HCT116 (cell line): ENCODE measurements at regions of chr5 and their contacts with region 1.

Region 1: GRCh38 chr5:141701360-141702119 is 19.5 kb upstream of the ARAP3 start:
- DNase-seq: no peak
- ATAC-seq: peak; percentile 53
- H3K4me3 ChIP-seq: no peak overlapping the region
- H3K27ac ChIP-seq: no peak overlapping the region
- H3K4me1 ChIP-seq: peaks cover 0 to 7% of the 10 kb centered on the region in 2 experiments; a peak in 1 of 4 replicates
- H3K27me3 ChIP-seq: no peaks in the 10 kb centered on the region
- CTCF ChIP-seq: no peak
- POLR2A ChIP-seq: no peak
- RAD21 ChIP-seq: no peak

Region 2: GRCh38 chr5:141326088-141326854 is 375.3 kb before region 1 on chr5:
- CTCF ChIA-PET with region 1: no interaction called
- POLR2A ChIA-PET with region 1: no interaction called
- RAD21 ChIA-PET with region 1: no interaction called
- intact Hi-C with region 1: no loop called
- DNase-seq: no peak
- ATAC-seq: no peak
- H3K4me3 ChIP-seq: no peak overlapping the region
- H3K27ac ChIP-seq: no peak overlapping the region
- H3K4me1 ChIP-seq: peaks cover 0 to 2% of the 10 kb centered on the region in 2 experiments; a peak in 1 of 4 replicates
- H3K27me3 ChIP-seq: no peaks in the 10 kb centered on the region
- CTCF ChIP-seq: no peak
- POLR2A ChIP-seq: no peak
- RAD21 ChIP-seq: no peak

Region 3: GRCh38 chr5:141757402-141757801 is 55.9 kb after region 1 on chr5:
- CTCF ChIA-PET with region 1: no interaction called
- POLR2A ChIA-PET with region 1: no interaction called
- RAD21 ChIA-PET with region 1: no interaction called
- intact Hi-C with region 1: loop called (anchors 1 kb)
- DNase-seq: peak; percentile 34
- ATAC-seq: peak; percentile 93
- H3K4me3 ChIP-seq: no peak overlapping the region
- H3K27ac ChIP-seq: no peak overlapping the region
- H3K4me1 ChIP-seq: peaks cover 0 to 9% of the 10 kb centered on the region in 2 experiments; a peak in 1 of 4 replicates
- H3K27me3 ChIP-seq: peaks cover 3% of the 10 kb centered on the region; the same call in 1 of the 2 replicates
- CTCF ChIP-seq: peak; percentile 61 to 75 (median 71)
- POLR2A ChIP-seq: no peak
- RAD21 ChIP-seq: peak; percentile 85

Region 4: DNA sequence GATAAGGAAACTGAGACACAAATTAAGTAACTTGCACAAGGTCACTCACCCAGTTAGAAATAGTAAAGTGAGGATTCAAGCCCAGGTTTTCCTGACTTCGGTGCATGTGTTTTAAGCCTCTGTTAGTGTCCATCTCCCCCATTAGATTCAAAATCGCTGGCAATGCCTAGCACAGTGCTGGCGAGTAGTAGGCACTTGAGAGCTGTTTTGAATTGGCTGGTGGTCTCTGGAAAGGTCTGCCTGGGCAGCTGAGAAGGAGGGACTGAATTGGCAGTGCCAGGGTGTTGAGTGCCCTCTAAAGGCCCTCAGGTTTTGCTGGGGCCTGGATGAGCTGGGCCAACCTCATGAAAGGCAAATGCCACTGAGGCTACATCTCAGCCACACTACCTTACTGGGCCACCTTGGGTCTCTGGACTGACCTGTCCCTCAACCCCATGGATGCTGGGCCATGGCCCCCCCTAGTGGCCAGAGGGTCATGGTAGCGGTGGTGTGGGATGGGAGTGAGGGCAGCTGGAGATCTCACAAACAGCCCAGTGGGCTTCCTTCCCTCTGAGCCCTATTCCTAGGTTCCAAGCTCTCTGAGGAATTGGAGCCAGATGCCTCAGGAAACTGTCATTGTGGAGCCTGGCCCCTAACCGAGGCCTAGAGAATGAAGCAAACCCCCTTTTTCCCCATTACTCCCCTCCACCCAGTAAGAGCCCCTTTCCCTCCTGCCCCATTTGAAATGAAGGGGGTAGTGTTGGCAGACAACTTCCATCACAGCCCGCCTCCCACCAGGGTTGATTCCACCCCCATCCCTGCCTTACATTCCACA is 112.5 kb after region 1 on chr5:
- CTCF ChIA-PET with region 1: no interaction called
- POLR2A ChIA-PET with region 1: no interaction called
- RAD21 ChIA-PET with region 1: interaction called in 1 of 2 experiments, 3 read pairs
- intact Hi-C with region 1: loop called (anchors 1 kb)
- DNase-seq: peak; percentile 36
- ATAC-seq: peak; percentile 95
- H3K4me3 ChIP-seq: no peak overlapping the region
- H3K27ac ChIP-seq: no peak overlapping the region
- H3K4me1 ChIP-seq: no peaks in the 10 kb centered on the region; a peak in 1 of 4 replicates
- H3K27me3 ChIP-seq: 0 out of 2 replicates have a peak, but pooled peaks cover 5% of the 10 kb centered on the region
- CTCF ChIP-seq: peak; percentile 72 to 93 (median 87); a peak in 5 of 6 replicates
- POLR2A ChIP-seq: no peak
- RAD21 ChIP-seq: peak; percentile 85